Panc1 (cell line): ENCODE measurements at regions of chr5 and their contacts with region 1.

Region 1: DNA sequence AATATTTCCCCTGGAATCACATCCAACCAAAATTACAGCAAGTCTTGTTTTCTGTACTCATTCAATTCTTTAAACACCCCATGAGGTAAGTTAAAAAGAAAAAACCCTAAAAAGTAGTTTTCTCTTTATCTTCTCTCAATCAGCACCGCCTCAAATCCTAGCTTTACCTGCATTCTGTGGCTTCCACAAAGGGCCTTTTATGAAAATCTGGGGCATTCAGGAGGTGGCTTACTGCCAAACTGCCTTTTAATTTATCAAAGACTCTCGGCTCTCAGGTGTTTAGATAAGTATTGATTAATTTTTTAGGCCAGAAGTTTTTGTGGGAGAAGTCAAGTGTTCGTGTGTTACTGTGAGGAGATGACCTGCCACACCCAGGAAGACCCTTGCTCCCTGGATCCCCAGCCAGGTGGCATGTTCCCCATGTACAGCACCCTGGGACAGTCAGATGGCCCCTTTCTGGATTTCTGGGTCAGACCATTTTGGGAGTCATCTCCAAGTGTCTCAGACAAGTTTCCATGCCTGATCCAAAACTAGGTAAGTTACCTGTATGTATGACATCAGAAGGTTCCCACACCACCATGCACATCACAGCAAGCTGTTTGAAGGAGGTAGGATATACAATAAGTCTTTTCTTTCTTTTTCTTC is 6.2 kb upstream of the TMEM171 start:
- DNase-seq: no peak
- ATAC-seq: no peak
- H3K4me3 ChIP-seq: no peak overlapping the region
- H3K27ac ChIP-seq: no peak overlapping the region
- H3K4me1 ChIP-seq: peaks cover 6% of the 10 kb centered on the region; the same call in 1 of the 2 replicates
- H3K27me3 ChIP-seq: no peaks in the 10 kb centered on the region
- CTCF ChIP-seq: no peak

Region 2: GRCh38 chr5:72991394-72991793 is 122.8 kb before region 1 on chr5:
- CTCF ChIA-PET with region 1: no interaction called
- POLR2A ChIA-PET with region 1: no interaction called
- in situ Hi-C with region 1: no loop called
- intact Hi-C with region 1: no loop called
- DNase-seq: no peak
- ATAC-seq: no peak
- H3K4me3 ChIP-seq: no peak overlapping the region
- H3K27ac ChIP-seq: no peak overlapping the region
- H3K4me1 ChIP-seq: no peaks in the 10 kb centered on the region
- H3K27me3 ChIP-seq: no peaks in the 10 kb centered on the region
- CTCF ChIP-seq: no peak

Region 3: DNA sequence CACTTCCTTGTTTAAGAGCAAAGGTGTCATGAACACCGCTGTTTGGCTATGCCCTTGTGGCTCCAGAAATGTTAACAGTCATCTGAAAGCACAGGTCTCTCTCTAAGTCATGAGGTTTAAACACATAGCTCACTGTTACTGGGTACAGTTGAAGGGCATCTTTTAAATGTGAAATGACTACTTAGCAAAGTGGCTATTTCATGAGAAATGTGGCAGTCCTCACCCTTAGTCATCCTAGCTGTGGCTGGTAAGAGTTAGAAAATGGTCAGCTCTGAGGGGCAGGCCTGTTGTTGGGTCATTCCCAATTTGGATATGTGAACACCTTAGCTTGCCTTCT is 18.0 kb before region 1 on chr5:
- CTCF ChIA-PET with region 1: no interaction called
- POLR2A ChIA-PET with region 1: interaction called, 11 read pairs
- in situ Hi-C with region 1: no loop called
- intact Hi-C with region 1: no loop called
- DNase-seq: no peak
- ATAC-seq: no peak
- H3K4me3 ChIP-seq: no peak overlapping the region
- H3K27ac ChIP-seq: no peak overlapping the region
- H3K4me1 ChIP-seq: no peaks in the 10 kb centered on the region
- H3K27me3 ChIP-seq: no peaks in the 10 kb centered on the region
- CTCF ChIP-seq: no peak

Region 4: GRCh38 chr5:73321757-73322436 is 207.7 kb after region 1 on chr5:
- CTCF ChIA-PET with region 1: no interaction called
- POLR2A ChIA-PET with region 1: no interaction called
- in situ Hi-C with region 1: no loop called
- intact Hi-C with region 1: no loop called
- DNase-seq: peak; percentile 80
- ATAC-seq: peak; percentile 65; the same call in 1 of the 2 replicates
- H3K4me3 ChIP-seq: no peak overlapping the region
- H3K27ac ChIP-seq: no peak overlapping the region
- H3K4me1 ChIP-seq: no peaks in the 10 kb centered on the region
- H3K27me3 ChIP-seq: no peaks in the 10 kb centered on the region
- CTCF ChIP-seq: no peak